ENCODE measurements at regions of chr1 and their contacts with region 1.

Region 1: GRCh38 chr1:223123011-223123610 is 19.9 kb downstream of the TLR5 start:
- DNase-seq: no peak
- H3K4me3 ChIP-seq: peak overlapping the region; percentile 26
- H3K4me3 Mint-ChIP-seq: peak overlapping the region; percentile 14 to 90 (median 75)
- H3K27ac ChIP-seq: no peak overlapping the region
- H3K27ac Mint-ChIP-seq: peak overlapping the region in 1 of 8 donors; percentile 2
- H3K4me1 ChIP-seq: no peaks in the 10 kb centered on the region
- H3K4me1 Mint-ChIP-seq: peaks cover 6 to 8% (median 7%) of the 10 kb centered on the region in 3 donors
- H3K27me3 ChIP-seq: no peaks in the 10 kb centered on the region
- H3K27me3 Mint-ChIP-seq: no peaks in the 10 kb centered on the region

Region 2: DNA sequence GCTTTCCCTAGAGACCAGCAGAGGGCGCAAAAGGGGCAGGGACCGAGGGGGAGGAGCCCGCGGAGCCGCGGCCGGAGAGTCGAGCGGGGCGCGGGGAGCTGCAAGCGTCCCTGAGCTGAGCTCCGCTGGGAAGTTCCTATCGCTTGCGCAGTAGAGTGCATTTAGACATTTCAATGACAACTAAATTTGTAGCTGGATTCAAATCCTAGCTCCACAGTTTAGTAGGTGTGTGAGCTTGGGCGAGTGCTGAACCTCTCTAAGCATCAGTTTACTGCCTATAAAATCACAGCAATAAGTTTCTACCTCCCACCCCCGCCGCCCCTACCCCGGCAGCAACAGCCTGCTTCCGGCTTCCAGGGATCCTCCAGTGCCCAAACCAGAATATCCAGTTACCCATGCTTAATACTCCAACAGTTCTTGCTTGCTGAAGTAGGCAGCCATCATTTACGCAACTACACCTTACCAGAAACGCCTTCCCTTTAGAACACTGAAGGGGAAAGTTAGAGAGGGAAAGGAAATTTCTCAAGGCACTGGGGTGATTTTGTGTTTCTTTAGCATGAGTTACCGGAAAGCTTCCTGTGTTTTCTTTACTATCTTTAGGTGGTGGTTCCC is 10.8 kb after region 1 on chr1:
- CTCF ChIA-PET with region 1: interaction called, 69 read pairs
- POLR2A ChIA-PET with region 1: no interaction called
- DNase-seq: peak; percentile 66 to 80 (median 72)
- H3K4me3 ChIP-seq: peak overlapping the region; percentile 5
- H3K4me3 Mint-ChIP-seq: peak overlapping the region; percentile 13 to 79 (median 54)
- H3K27ac ChIP-seq: no peak overlapping the region
- H3K27ac Mint-ChIP-seq: peak overlapping the region in 1 of 8 donors; percentile 80
- H3K4me1 ChIP-seq: peaks cover 14% of the 10 kb centered on the region
- H3K4me1 Mint-ChIP-seq: peaks cover 9 to 18% (median 10%) of the 10 kb centered on the region in 3 donors
- H3K27me3 ChIP-seq: no peaks in the 10 kb centered on the region
- H3K27me3 Mint-ChIP-seq: peaks cover 11 to 31% of the 10 kb centered on the region in 2 donors

Region 3: GRCh38 chr1:223142795-223143536 is 19.9 kb after region 1 on chr1 and contains the start of gene TLR5:
- CTCF ChIA-PET with region 1: interaction called, 69 read pairs
- POLR2A ChIA-PET with region 1: no interaction called
- DNase-seq: peak; percentile 78 to 88 (median 83)
- H3K4me3 ChIP-seq: peak within 1 kb of the TSS; percentile 59
- H3K4me3 Mint-ChIP-seq: peak within 1 kb of the TSS; percentile 72 to 86 (median 80)
- H3K27ac ChIP-seq: peak within 1 kb of the TSS; percentile 51
- H3K27ac Mint-ChIP-seq: peak within 1 kb of the TSS in 7 of 8 donors; percentile 68 to 95 (median 90)
- H3K4me1 ChIP-seq: peaks cover 23% of the 10 kb centered on the region
- H3K4me1 Mint-ChIP-seq: peaks cover 18 to 25% (median 22%) of the 10 kb centered on the region in 3 donors
- H3K27me3 ChIP-seq: no peaks in the 10 kb centered on the region
- H3K27me3 Mint-ChIP-seq: peaks cover 0 to 14% of the 10 kb centered on the region in 2 donors
- total RNA-seq, gene TLR5: 0.22 to 0.46 TPM

Region 4: DNA sequence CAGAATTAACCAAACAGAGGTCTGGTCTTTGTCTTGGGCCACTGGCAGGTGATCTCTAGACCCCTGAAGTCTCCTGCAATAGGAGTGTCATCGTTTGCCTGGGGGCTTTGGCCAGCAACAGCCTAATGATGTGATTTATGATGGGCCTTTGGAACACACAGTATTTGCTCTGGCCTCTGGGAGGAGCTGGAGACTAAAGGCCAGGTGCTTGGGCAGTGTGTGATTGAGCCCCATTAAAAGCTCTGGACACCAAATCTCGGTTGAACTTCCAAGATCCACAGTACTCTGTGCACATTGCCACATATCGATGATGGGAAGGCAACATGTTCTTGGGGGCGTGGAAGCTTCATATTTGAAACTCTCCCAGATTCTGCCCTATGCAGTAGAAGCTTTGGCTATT is 51.9 kb after region 1 on chr1:
- CTCF ChIA-PET with region 1: no interaction called
- POLR2A ChIA-PET with region 1: no interaction called
- DNase-seq: no peak
- H3K4me3 ChIP-seq: no peak overlapping the region
- H3K4me3 Mint-ChIP-seq: no peak overlapping the region
- H3K27ac ChIP-seq: no peak overlapping the region
- H3K27ac Mint-ChIP-seq: no peak overlapping the region
- H3K4me1 ChIP-seq: no peaks in the 10 kb centered on the region
- H3K4me1 Mint-ChIP-seq: no peaks in the 10 kb centered on the region
- H3K27me3 ChIP-seq: no peaks in the 10 kb centered on the region
- H3K27me3 Mint-ChIP-seq: peaks cover 4 to 9% of the 10 kb centered on the region in 2 donors

Measured in CD8-positive, alpha-beta memory T cell (primary cell).